A549 (cell line): ENCODE measurements at regions of chr9 and their contacts with region 1.

Region 1: GRCh38 chr9:108525186-108525585 is 330.6 kb downstream of the ACTL7B start:
- DNase-seq: no peak
- ATAC-seq: no peak
- H3K4me3 ChIP-seq: no peak overlapping the region
- H3K27ac ChIP-seq: no peak overlapping the region
- H3K4me1 ChIP-seq: 0 out of 3 replicates have a peak, but pooled peaks cover 2% of the 10 kb centered on the region
- CTCF ChIP-seq: no peak
- EP300 ChIP-seq: no peak
- POLR2A ChIP-seq: no peak
- RAD21 ChIP-seq: no peak

Region 2: DNA sequence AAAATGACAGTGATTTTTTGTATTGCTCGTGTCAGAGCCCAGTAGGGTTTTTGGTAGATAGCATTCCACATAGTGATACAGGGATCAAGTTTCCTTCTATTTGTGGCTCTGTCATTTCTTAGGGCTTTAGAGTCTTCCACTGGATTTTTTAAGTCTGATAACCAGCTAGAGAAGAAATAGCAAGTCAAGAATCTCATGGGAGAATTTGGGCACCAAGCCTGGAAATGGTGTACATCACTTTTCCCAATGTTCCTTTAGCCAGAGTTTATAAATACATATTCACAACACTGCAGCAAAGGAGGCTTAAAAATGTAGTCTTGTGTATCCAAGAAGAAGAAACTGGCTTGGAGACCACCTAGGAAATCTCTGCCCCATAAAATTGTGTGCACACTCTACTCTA is 388.5 kb before region 1 on chr9:
- CTCF ChIA-PET with region 1: no interaction called
- POLR2A ChIA-PET with region 1: no interaction called
- DNase-seq: no peak
- ATAC-seq: no peak
- H3K4me3 ChIP-seq: no peak overlapping the region
- H3K27ac ChIP-seq: no peak overlapping the region
- H3K4me1 ChIP-seq: no peaks in the 10 kb centered on the region
- CTCF ChIP-seq: no peak
- EP300 ChIP-seq: no peak
- POLR2A ChIP-seq: no peak
- RAD21 ChIP-seq: no peak

Region 3: GRCh38 chr9:108511307-108511706 is 13.9 kb before region 1 on chr9:
- CTCF ChIA-PET with region 1: no interaction called
- POLR2A ChIA-PET with region 1: no interaction called
- DNase-seq: no peak
- ATAC-seq: no peak
- H3K4me3 ChIP-seq: no peak overlapping the region
- H3K27ac ChIP-seq: no peak overlapping the region
- H3K4me1 ChIP-seq: no peaks in the 10 kb centered on the region
- CTCF ChIP-seq: no peak
- EP300 ChIP-seq: no peak
- POLR2A ChIP-seq: no peak
- RAD21 ChIP-seq: no peak

Region 4: GRCh38 chr9:108535526-108535925 is 10.3 kb after region 1 on chr9:
- CTCF ChIA-PET with region 1: interaction called, 30 read pairs
- POLR2A ChIA-PET with region 1: no interaction called
- DNase-seq: peak; percentile 27 to 48
- ATAC-seq: peak; percentile 77 to 85; a peak in 4 of 6 replicates
- H3K4me3 ChIP-seq: no peak overlapping the region
- H3K27ac ChIP-seq: no peak overlapping the region
- H3K4me1 ChIP-seq: no peaks in the 10 kb centered on the region
- CTCF ChIP-seq: peak; percentile 45
- EP300 ChIP-seq: no peak
- POLR2A ChIP-seq: no peak
- RAD21 ChIP-seq: peak; percentile 27 to 44; a peak in 3 of 5 replicates